ENCODE measurements at regions of chr1 and their contacts with region 1.

Region 1: DNA sequence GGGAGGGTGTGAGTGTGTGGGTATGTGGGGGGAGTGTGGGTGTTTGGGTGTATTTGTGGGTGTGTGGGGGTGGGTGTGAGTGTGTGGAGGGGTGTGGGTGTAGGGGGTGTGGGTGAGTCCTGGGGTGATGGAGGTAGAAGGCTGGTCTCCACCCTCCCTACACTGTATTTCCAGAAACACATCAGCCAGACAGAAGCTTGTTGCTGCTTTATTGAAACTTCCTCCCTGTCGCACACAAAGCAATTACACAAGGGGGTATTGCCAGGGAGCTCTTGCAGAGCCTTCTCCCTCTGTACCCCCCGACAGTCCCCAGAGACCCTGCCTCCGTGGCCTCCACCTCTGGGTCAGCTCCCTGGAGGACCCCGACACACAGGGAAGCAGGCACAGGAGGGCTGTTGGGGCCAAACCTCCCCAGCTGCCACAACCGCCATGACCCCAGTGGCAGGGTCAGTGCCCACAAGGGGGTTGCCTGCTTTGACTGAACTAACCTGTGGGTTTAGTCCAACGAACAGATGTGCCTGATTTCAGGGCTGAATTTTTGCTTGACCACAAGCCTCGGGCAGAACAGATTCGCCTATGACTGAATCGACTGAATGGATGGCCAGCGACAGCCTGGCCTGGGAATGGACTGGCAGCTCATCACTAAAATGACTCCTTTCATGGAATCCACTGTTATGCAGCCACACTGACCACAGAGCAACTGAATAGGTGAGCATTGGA is 9.1 kb upstream of the MATN1 start:
- DNase-seq: peak in 2 of 9 donors; percentile 26 to 48
- ATAC-seq: peak; percentile 71
- H3K4me3 ChIP-seq: no peak overlapping the region
- H3K4me3 Mint-ChIP-seq: peak overlapping the region in 1 of 10 donors; percentile 34
- H3K27ac ChIP-seq: peak overlapping the region; percentile 48
- H3K27ac Mint-ChIP-seq: peak overlapping the region; percentile 60 to 89 (median 83)
- H3K4me1 ChIP-seq: peaks cover 4 to 10% of the 10 kb centered on the region in 2 donors
- H3K4me1 Mint-ChIP-seq: peaks cover 19 to 30% (median 23%) of the 10 kb centered on the region in 7 donors
- H3K27me3 ChIP-seq: no peaks in the 10 kb centered on the region
- H3K27me3 Mint-ChIP-seq: no peaks in the 10 kb centered on the region

Region 2: GRCh38 chr1:30743584-30744059 is 11.2 kb after region 1 on chr1:
- CTCF ChIA-PET with region 1: interaction called, 7 read pairs
- POLR2A ChIA-PET with region 1: interaction called, 1,281 read pairs
- intact Hi-C with region 1: loop called in 1 of 2 experiments (anchors 1 kb)
- DNase-seq: peak in 8 of 9 donors; percentile 58 to 90 (median 82)
- ATAC-seq: peak; percentile 83
- H3K4me3 ChIP-seq: peak overlapping the region; percentile 45
- H3K4me3 Mint-ChIP-seq: peak overlapping the region; percentile 82 to 98 (median 91)
- H3K27ac ChIP-seq: peak overlapping the region; percentile 98
- H3K27ac Mint-ChIP-seq: peak overlapping the region; percentile 90 to 100 (median 97)
- H3K4me1 ChIP-seq: peaks cover 84 to 86% of the 10 kb centered on the region in 2 donors
- H3K4me1 Mint-ChIP-seq: peaks cover 75 to 100% (median 97%) of the 10 kb centered on the region in 7 donors
- H3K27me3 ChIP-seq: no peaks in the 10 kb centered on the region
- H3K27me3 Mint-ChIP-seq: no peaks in the 10 kb centered on the region

Region 3: DNA sequence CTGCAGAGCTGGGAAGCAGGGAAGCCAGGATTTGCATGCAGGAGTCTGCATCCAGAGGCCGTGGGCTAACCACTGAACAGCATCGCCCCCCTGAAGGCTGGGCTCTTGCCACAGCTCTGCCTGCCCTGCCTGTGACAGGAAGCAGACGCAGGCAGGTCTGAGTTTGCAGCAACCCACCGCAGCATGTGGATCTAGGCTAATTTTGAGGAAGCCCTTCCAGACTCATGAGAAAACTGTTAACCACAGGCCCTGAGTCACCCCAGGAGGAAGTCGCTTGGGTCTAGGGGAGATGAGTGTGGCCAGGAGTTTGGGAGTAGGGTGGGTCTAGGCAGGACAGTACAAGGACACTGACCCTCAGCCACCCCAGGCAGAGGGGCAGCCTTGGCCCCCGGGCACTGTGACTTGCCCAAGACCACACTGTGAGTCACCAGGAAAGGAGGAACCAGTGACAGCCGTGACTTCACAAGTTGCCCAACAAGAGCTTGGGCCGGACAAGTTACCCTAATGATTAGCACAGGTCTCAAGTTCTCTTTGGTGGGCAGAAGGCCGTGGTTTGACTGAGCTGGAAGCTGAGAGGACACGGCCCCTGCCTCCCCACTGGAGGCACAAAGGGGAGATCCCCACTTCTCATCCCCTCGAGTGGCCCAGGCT is 24.2 kb after region 1 on chr1:
- CTCF ChIA-PET with region 1: interaction called, 4 read pairs
- POLR2A ChIA-PET with region 1: interaction called, 1,281 read pairs
- intact Hi-C with region 1: loop called in 1 of 2 experiments (anchors 1 kb)
- DNase-seq: peak; percentile 45 to 77 (median 65)
- ATAC-seq: peak; percentile 77
- H3K4me3 ChIP-seq: peak overlapping the region; percentile 80
- H3K4me3 Mint-ChIP-seq: peak overlapping the region; percentile 95 to 100 (median 98)
- H3K27ac ChIP-seq: peak overlapping the region; percentile 98
- H3K27ac Mint-ChIP-seq: peak overlapping the region; percentile 90 to 100 (median 97)
- H3K4me1 ChIP-seq: peaks cover 58 to 67% of the 10 kb centered on the region in 2 donors
- H3K4me1 Mint-ChIP-seq: peaks cover 68 to 90% (median 82%) of the 10 kb centered on the region in 7 donors
- H3K27me3 ChIP-seq: no peaks in the 10 kb centered on the region
- H3K27me3 Mint-ChIP-seq: no peaks in the 10 kb centered on the region

Region 4: DNA sequence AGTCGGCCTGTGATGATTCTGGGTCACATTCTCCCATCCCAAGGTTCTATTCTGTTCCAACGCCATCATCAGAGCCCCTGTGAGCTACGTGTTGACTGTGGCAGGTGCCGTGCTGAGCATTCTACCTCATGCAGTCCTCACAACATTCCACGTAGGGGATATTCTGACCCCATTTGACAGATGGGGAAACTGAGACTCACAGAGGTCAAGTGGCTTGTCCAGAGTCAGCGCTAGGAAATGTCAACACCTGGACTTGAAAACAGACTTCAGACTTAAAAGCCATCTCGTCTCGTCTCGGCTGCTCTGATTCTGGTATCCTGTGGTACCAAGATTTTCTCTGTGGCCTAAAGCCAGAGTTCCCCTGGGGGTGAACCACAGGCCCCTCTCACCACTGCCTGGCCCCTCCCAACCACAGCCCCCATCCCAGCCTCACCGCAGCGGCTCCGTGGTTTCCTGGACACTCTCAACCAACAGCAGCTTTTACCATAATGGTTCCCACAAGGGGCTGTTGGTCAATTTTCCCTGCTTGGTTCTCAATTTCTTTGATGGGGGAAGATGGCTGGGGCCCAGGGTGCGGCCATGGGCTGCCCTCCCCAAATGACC is 136.5 kb after region 1 on chr1:
- CTCF ChIA-PET with region 1: no interaction called
- POLR2A ChIA-PET with region 1: no interaction called
- intact Hi-C with region 1: no loop called
- DNase-seq: no peak
- ATAC-seq: no peak
- H3K4me3 ChIP-seq: no peak overlapping the region
- H3K4me3 Mint-ChIP-seq: no peak overlapping the region
- H3K27ac ChIP-seq: no peak overlapping the region
- H3K27ac Mint-ChIP-seq: no peak overlapping the region
- H3K4me1 ChIP-seq: no peaks in the 10 kb centered on the region
- H3K4me1 Mint-ChIP-seq: peaks cover 0 to 3% (median 0%) of the 10 kb centered on the region in 7 donors
- H3K27me3 ChIP-seq: no peaks in the 10 kb centered on the region
- H3K27me3 Mint-ChIP-seq: peaks cover 0 to 26% (median 13%) of the 10 kb centered on the region in 5 donors

Measured in naive thymus-derived CD4-positive, alpha-beta T cell (primary cell).